Naive thymus-derived CD4-positive, alpha-beta T cell (primary cell): ENCODE measurements at regions of chrX and their contacts with region 1.

Region 1: DNA sequence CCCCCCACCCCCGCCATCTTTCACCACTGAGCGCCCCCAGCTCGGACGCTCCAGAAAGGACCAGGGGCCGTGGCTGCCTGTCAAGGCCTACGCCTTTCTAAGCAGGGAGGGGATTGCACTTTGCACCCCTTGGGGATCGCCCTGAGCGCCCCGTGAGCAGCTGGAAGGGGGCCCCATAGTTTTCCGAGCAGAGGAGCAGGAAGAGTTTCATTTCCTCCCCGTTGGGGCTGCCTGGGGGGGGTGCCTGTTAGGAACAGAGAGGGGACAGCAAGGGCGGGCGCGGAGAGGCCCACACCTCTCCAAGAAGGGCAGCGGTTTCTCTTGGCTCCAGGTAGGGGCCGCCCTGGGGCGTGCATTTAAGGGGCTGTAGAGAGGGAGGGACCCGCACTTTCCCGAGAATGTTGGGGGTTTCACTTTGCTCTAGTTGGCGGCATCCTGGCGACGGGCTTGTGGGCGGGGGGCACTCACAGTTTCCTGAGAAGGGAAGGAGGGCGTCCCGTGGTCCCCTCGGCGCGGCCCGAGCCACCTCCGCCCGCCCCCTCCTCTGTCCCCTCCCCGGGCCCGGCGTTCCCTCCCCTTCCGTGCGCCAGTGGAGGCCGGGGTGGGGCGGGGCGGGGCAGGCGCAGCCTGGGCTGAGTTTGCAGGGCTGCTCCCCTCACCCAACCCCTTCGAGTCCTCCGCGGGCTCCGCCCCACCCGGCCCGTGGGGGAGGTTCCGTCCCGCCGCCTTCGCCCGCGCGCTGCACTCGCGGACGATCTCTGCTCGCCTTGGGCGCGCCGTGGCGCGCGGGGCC is 82.3 kb upstream of the CD99 start:
- DNase-seq: peak; percentile 69 to 89 (median 79)
- ATAC-seq: peak; percentile 99
- H3K4me3 ChIP-seq: peak overlapping the region; percentile 89
- H3K4me3 Mint-ChIP-seq: peak overlapping the region; percentile 90 to 96 (median 93)
- H3K27ac ChIP-seq: peak overlapping the region; percentile 71
- H3K27ac Mint-ChIP-seq: peak overlapping the region; percentile 51 to 93 (median 86)
- H3K4me1 ChIP-seq: peaks cover 9 to 17% of the 10 kb centered on the region in 2 donors
- H3K4me1 Mint-ChIP-seq: peaks cover 39 to 72% (median 56%) of the 10 kb centered on the region in 7 donors
- H3K27me3 ChIP-seq: no peaks in the 10 kb centered on the region
- H3K27me3 Mint-ChIP-seq: no peaks in the 10 kb centered on the region

Region 2: DNA sequence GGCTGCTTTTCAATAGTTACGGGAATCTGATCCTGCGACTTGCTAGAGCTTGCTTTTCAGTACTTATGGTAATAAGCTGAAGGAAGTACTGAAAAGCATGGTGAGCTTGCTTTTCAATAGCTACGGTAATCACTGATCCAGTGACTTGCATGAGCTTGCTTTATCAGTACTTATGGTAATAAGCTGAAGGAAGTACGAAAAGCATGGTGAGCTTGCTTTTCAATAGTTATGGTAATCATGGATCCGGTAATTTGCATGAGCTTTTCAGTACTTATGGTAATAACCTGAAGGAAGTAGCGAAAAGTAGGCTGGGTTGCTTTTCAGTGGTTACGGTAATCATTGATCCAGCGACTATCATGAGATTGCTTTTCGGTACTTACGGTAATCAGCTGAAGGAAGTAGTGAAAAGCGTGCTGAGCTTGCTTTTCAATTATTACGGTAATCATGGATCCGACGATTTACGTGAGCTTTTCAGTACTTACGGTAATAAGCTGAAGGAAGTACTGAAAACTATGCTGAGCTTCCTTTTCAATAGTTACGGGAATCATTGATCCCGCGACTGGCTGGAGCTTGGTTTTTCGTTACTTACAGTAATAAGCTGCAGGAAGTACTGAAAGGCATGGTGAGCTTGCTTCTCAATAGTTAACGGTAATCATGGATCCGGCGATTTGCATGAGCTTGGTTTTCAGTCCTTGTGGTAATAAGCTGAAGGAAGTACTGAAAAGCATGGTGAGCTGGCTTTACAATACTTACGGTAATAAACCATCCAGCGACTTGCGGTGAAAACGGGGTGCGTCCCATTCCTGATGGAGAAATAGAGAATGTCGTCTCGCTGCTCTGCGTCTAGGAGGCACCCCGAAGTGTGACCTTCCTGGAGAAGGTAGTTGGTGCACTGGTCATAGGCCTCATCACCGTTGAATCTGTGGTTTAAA is 1402.9 kb before region 1 on chrX:
- CTCF ChIA-PET with region 1: no interaction called
- POLR2A ChIA-PET with region 1: no interaction called
- intact Hi-C with region 1: loop called in 1 of 2 experiments (anchors 10 kb)
- DNase-seq: peak; percentile 14 to 77 (median 69)
- ATAC-seq: peak; percentile 70
- H3K4me3 ChIP-seq: peak overlapping the region; percentile 56
- H3K4me3 Mint-ChIP-seq: peak overlapping the region; percentile 76 to 87 (median 83)
- H3K27ac ChIP-seq: no peak overlapping the region
- H3K27ac Mint-ChIP-seq: peak overlapping the region in 7 of 9 donors; percentile 22 to 68 (median 36)
- H3K4me1 ChIP-seq: peaks cover 6 to 11% of the 10 kb centered on the region in 2 donors
- H3K4me1 Mint-ChIP-seq: peaks cover 15 to 42% (median 32%) of the 10 kb centered on the region in 7 donors
- H3K27me3 ChIP-seq: no peaks in the 10 kb centered on the region
- H3K27me3 Mint-ChIP-seq: no peaks in the 10 kb centered on the region

Region 3: DNA sequence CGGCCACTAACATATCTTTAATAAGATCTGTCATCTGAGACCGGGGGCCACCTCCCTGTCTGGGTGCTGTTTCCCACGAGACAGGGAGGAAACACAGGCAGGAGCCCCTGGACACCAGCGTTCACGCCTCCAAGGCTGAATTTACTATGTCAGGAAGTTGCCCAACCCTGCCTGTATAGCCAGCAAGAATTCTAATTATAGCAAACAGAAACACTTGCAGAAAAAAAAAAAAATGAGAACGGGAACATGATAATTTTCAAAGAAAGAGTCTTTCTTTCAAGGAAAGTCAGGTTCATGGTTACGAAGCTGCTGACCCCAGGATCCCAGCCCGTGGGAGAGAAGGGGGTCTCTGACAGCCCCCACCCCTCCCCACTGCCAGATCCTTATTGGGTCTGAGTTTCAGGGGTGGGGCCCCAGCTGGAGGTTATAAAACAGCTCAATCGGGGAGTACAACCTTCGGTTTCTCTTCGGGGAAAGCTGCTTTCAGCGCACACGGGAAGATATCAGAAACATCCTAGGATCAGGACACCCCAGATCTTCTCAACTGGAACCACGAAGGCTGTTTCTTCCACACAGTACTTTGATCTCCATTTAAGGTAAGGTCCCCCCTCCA is 1272.4 kb before region 1 on chrX and contains the start of gene IL3RA:
- CTCF ChIA-PET with region 1: no interaction called
- POLR2A ChIA-PET with region 1: no interaction called
- intact Hi-C with region 1: loop called in 1 of 2 experiments (anchors 5 kb)
- DNase-seq: peak in 4 of 9 donors; percentile 7 to 14 (median 12)
- ATAC-seq: peak; percentile 79
- H3K4me3 ChIP-seq: peak within 1 kb of the TSS; percentile 38
- H3K4me3 Mint-ChIP-seq: peak within 1 kb of the TSS; percentile 77 to 97 (median 84)
- H3K27ac ChIP-seq: no peak within 1 kb of the TSS
- H3K27ac Mint-ChIP-seq: peak within 1 kb of the TSS in 8 of 9 donors; percentile 0 to 89 (median 42)
- H3K4me1 ChIP-seq: no peaks in the 10 kb centered on the region
- H3K4me1 Mint-ChIP-seq: peaks cover 6 to 32% (median 9%) of the 10 kb centered on the region in 7 donors
- H3K27me3 ChIP-seq: no peaks in the 10 kb centered on the region
- H3K27me3 Mint-ChIP-seq: peaks cover 0 to 4% (median 3%) of the 10 kb centered on the region in 5 donors
- total RNA-seq, gene IL3RA: 7.9 to 23.7 (median 10.5) TPM in 3 of 5 experiments, not detected in the others

Region 4: DNA sequence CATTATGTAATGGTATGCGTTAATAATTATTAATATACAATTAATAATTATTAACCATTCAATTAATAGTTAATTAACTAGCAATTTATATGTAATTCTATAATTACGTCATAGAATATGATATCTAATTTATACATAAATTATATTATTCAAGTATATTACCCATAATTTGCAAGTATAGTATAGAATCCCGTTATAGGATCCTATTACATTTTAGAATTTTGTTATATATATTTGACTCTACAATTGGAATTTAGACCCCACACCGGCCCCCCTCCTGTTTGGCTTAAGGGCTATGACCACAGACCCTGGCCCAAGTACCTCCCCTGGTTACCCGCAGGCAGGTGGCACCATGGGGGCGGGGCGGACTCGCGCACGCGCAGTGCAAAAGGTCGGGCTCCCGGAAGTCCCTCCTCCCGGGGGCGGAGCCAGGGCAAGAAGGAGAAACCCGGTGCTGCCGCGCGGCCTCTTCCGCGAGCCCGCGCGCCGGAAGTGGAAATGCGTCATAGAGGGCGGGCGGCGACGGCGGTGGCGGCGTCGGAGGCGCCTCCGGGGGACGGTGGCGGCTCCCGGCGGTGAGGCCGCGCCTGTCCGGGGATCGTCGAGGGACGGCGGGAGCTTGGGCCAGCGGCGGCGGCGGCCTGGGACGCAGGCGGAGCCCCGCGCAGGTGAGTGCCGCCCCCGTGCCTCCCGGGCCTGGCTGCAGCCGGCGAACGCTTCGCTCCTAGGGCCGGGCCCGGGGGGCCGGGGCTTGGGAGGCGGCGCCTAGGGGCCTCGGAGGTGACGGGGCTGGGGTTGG is 1017.5 kb before region 1 on chrX and contains the start of gene AKAP17A:
- CTCF ChIA-PET with region 1: no interaction called
- POLR2A ChIA-PET with region 1: no interaction called
- intact Hi-C with region 1: loop called in 1 of 2 experiments (anchors 2 kb)
- DNase-seq: peak; percentile 92 to 100 (median 99)
- ATAC-seq: peak; percentile 95
- H3K4me3 ChIP-seq: peak within 1 kb of the TSS; percentile 76
- H3K4me3 Mint-ChIP-seq: peak within 1 kb of the TSS; percentile 85 to 97 (median 91)
- H3K27ac ChIP-seq: peak within 1 kb of the TSS; percentile 91
- H3K27ac Mint-ChIP-seq: peak within 1 kb of the TSS; percentile 82 to 94 (median 91)
- H3K4me1 ChIP-seq: peaks cover 7 to 10% of the 10 kb centered on the region in 2 donors
- H3K4me1 Mint-ChIP-seq: peaks cover 5 to 50% (median 34%) of the 10 kb centered on the region in 7 donors
- H3K27me3 ChIP-seq: no peaks in the 10 kb centered on the region
- H3K27me3 Mint-ChIP-seq: no peaks in the 10 kb centered on the region
- total RNA-seq, gene AKAP17A: 75.7 to 165 (median 125) TPM

Region 5: GRCh38 chrX:2500267-2501075 is 108.4 kb before region 1 on chrX and contains the starts of genes DHRSX and ZBED1:
- CTCF ChIA-PET with region 1: no interaction called
- POLR2A ChIA-PET with region 1: no interaction called
- intact Hi-C with region 1: loop called (anchors 2 to 5 kb)
- DNase-seq: peak; percentile 16 to 71 (median 40)
- ATAC-seq: peak; percentile 78
- H3K4me3 ChIP-seq: peak within 1 kb of the TSS; percentile 65
- H3K4me3 Mint-ChIP-seq: peak within 1 kb of the TSS; percentile 75 to 90 (median 89)
- H3K27ac ChIP-seq: peak within 1 kb of the TSS; percentile 77
- H3K27ac Mint-ChIP-seq: peak within 1 kb of the TSS; percentile 81 to 94 (median 88)
- H3K4me1 ChIP-seq: peaks cover 0 to 10% of the 10 kb centered on the region in 2 donors
- H3K4me1 Mint-ChIP-seq: peaks cover 15 to 39% (median 29%) of the 10 kb centered on the region in 7 donors
- H3K27me3 ChIP-seq: no peaks in the 10 kb centered on the region
- H3K27me3 Mint-ChIP-seq: no peaks in the 10 kb centered on the region
- total RNA-seq, gene DHRSX: 15.6 to 26.2 (median 20.4) TPM
- total RNA-seq, gene ZBED1: 23.7 to 37.0 (median 27.4) TPM

Region 6: GRCh38 chrX:2627272-2627867 is 18.5 kb after region 1 on chrX:
- CTCF ChIA-PET with region 1: no interaction called
- POLR2A ChIA-PET with region 1: no interaction called
- intact Hi-C with region 1: loop called (anchors 1 kb)
- DNase-seq: peak in 7 of 9 donors; percentile 34 to 49 (median 40)
- ATAC-seq: peak; percentile 61
- H3K4me3 ChIP-seq: no peak overlapping the region
- H3K4me3 Mint-ChIP-seq: peak overlapping the region in 3 of 10 donors; percentile 19 to 33 (median 20)
- H3K27ac ChIP-seq: no peak overlapping the region
- H3K27ac Mint-ChIP-seq: peak overlapping the region in 6 of 9 donors; percentile 28 to 100 (median 56)
- H3K4me1 ChIP-seq: peaks cover 16% of the 10 kb centered on the region in 2 donors
- H3K4me1 Mint-ChIP-seq: peaks cover 23 to 53% (median 51%) of the 10 kb centered on the region in 7 donors
- H3K27me3 ChIP-seq: no peaks in the 10 kb centered on the region
- H3K27me3 Mint-ChIP-seq: no peaks in the 10 kb centered on the region

Region 7: GRCh38 chrX:2652106-2652505 is 43.3 kb after region 1 on chrX:
- CTCF ChIA-PET with region 1: no interaction called
- POLR2A ChIA-PET with region 1: no interaction called
- intact Hi-C with region 1: no loop called
- DNase-seq: no peak
- ATAC-seq: no peak
- H3K4me3 ChIP-seq: no peak overlapping the region
- H3K4me3 Mint-ChIP-seq: no peak overlapping the region
- H3K27ac ChIP-seq: no peak overlapping the region
- H3K27ac Mint-ChIP-seq: no peak overlapping the region
- H3K4me1 ChIP-seq: no peaks in the 10 kb centered on the region
- H3K4me1 Mint-ChIP-seq: peaks cover 0 to 8% (median 0%) of the 10 kb centered on the region in 7 donors
- H3K27me3 ChIP-seq: no peaks in the 10 kb centered on the region
- H3K27me3 Mint-ChIP-seq: no peaks in the 10 kb centered on the region

Region 8: GRCh38 chrX:2811271-2811670 is 202.4 kb after region 1 on chrX:
- CTCF ChIA-PET with region 1: no interaction called
- POLR2A ChIA-PET with region 1: no interaction called
- intact Hi-C with region 1: loop called in 1 of 2 experiments (anchors 1 kb)
- DNase-seq: no peak
- ATAC-seq: no peak
- H3K4me3 ChIP-seq: no peak overlapping the region
- H3K4me3 Mint-ChIP-seq: no peak overlapping the region
- H3K27ac ChIP-seq: no peak overlapping the region
- H3K27ac Mint-ChIP-seq: no peak overlapping the region
- H3K4me1 ChIP-seq: no peaks in the 10 kb centered on the region
- H3K4me1 Mint-ChIP-seq: peaks cover 0 to 4% (median 0%) of the 10 kb centered on the region in 7 donors
- H3K27me3 ChIP-seq: no peaks in the 10 kb centered on the region
- H3K27me3 Mint-ChIP-seq: peaks cover 0 to 12% (median 0%) of the 10 kb centered on the region in 5 donors